ENCODE measurements at regions of chr14 and their contacts with region 1.

Region 1: DNA sequence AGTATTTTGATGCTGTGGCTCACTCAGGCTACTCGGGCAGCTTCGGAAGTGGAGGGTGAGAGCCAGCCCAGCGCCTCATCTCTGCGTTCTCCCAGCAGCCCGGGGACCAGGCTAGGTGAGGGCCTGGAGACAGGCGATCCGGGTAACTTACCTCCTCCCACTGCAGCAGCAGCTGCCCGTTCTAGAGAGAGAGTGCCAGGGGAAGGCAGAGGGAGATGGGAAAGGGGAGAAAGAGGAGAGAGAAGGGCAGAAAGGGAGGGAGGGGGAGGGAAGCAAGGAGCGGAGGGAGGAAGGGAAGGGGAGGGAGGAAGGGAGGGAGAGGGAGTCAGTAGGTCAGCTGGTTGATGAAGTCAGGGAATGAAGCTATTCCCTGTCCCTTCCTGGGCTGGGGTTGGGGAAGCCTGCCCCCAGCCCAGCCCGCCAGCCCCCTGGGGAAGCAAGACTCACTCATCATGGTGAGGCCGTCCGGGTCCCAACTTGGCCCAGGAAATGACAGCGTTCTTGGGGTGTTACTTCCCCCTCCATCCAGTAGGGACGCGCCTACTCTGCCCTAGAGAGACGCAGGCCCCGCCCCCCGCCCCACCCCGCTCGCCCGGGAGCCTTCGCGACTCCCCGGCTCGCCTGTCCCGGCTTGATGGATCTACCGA is at the start of gene IFI27L2:
- DNase-seq: peak in 1 of 2 donors; percentile 53
- H3K4me3 ChIP-seq: peak within 1 kb of the TSS; percentile 49 to 74 (median 66)
- H3K27ac ChIP-seq: peak within 1 kb of the TSS; percentile 88 to 93
- H3K4me1 ChIP-seq: no peaks in the 10 kb centered on the region
- H3K27me3 ChIP-seq: no peaks in the 10 kb centered on the region
- CTCF ChIP-seq: peak; percentile 3 to 29 (median 16)
- POLR2A ChIP-seq: no peak
- total RNA-seq, gene IFI27L2: 74.2 to 98.8 (median 92.1) TPM

Region 2: DNA sequence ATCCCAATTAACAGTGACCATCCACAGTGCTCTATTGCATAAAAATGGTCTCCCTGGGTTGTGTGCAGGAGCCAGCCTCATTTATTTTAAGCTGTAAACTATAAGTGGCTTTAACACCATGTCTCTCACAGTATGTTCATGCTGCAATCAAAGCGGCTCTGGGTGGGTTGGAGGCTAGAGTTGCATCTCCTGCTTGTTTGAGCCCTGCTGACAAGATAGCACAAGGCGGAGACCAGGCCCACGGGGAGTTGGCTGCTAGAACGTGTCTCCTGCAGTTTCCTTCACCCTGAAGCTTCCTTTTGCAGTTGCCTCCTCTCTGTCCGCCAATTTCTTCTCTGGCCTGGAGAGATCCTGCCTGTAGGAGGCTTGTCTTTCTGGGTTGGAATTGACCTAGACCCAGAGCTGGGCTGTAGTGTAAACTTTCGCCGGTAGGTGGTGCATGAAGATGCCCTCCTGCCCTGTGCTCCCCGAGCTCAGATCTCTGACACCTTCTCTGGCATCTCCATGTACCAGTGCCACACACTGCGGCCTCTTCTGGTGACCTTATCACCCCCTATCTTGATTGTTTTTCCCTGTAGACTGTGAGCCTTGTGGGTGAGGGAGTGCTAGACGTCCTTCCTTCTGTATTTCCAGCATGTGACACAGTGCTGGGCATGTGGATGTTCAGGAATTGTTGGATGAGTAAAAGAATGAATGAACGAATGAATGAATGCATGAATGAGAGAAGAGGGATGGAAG is 92.8 kb before region 1 on chr14:
- intact Hi-C with region 1: loop called (anchors 10 kb)
- DNase-seq: peak; percentile 30 to 65
- H3K4me3 ChIP-seq: no peak overlapping the region
- H3K27ac ChIP-seq: no peak overlapping the region
- H3K4me1 ChIP-seq: no peaks in the 10 kb centered on the region
- H3K27me3 ChIP-seq: no peaks in the 10 kb centered on the region
- CTCF ChIP-seq: peak; percentile 60 to 81 (median 75)
- POLR2A ChIP-seq: no peak